Activated CD4-positive, alpha-beta T cell treated with anti-CD3 and anti-CD28 coated beads, Interleukin-2, amount 10 ng/mL, durations not matched to agents 24 days and 14 days (primary cell): ENCODE measurements at regions of chr10 and their contacts with region 1.

Region 1: DNA sequence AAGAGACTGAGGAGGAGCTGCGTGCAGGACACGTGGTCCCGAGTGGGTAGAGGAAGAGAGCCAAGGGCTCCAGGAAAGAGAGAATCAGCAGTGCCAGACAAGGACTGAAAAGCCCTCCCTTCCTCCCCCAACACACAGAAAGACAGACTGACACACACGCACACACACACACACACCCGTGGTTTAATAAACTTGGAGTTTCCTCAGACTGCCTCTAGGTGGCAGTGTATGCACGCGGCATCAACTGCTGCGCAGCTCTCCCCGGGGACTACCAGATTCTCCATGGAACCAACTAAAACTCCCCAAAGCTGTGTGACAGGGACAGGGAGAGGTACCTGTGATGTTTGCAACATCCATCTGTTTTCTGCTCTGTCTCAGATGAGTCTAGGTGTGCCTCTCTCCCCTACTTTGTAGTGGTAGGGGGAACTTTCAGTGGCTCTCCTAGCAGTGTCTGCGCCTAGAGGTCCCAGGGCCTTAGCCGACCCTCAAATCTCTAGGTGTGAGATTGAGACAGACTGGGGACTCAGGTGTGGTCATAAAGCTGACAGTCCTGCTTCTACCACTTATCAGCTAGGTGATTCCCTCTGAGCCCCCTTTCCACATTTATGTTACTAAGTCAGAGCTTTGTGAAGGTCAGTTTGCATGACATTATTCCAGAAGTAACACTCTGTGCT is 9.3 kb upstream of the TSPAN14 start:
- DNase-seq: peak; percentile 89
- H3K4me3 Mint-ChIP-seq: peak overlapping the region; percentile 5
- H3K27ac Mint-ChIP-seq: peak overlapping the region; percentile 22
- H3K4me1 Mint-ChIP-seq: peaks cover 29% of the 10 kb centered on the region
- H3K27me3 Mint-ChIP-seq: peaks cover 8% of the 10 kb centered on the region

Region 2: DNA sequence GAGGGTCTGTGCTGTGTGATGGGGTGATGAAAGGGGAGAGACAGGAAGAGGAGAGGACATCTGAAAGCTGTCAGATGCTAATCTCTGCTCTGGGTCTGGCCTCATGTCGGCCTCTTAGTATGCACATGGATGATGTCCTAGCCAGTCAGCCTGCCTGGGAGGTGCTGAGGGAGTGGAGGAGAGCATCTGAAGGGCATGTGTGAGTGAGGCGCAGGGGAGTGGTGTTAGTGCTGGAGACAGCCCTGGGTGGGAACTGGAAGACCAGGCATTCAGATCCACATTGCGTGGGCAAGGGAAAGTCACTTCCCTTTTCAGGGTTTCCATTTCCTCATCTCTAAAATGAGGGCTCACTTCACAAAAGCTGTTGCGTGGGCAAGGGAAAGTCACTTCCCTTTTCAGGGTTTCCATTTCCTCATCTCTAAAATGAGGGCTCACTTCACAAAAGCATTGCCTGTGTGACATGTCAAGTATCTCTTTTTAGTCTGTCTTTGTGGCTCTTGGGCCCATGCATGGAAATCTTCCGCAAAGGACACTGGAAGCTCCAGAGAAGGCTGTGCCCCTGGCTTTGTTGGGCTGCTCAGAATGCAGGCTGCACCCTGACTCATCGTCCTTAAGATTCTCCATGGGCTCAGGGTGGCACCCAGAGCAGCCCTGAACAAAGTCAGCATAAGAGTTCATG is 505.9 kb before region 1 on chr10:
- intact Hi-C with region 1: no loop called
- DNase-seq: peak; percentile 52
- H3K4me3 Mint-ChIP-seq: no peak overlapping the region
- H3K27ac Mint-ChIP-seq: no peak overlapping the region
- H3K4me1 Mint-ChIP-seq: peaks cover 5% of the 10 kb centered on the region
- H3K27me3 Mint-ChIP-seq: peaks cover 7% of the 10 kb centered on the region

Region 3: GRCh38 chr10:80382989-80383388 is 61.8 kb before region 1 on chr10:
- intact Hi-C with region 1: loop called (anchors 1 kb)
- DNase-seq: peak; percentile 87
- H3K4me3 Mint-ChIP-seq: no peak overlapping the region
- H3K27ac Mint-ChIP-seq: peak overlapping the region; percentile 49
- H3K4me1 Mint-ChIP-seq: peaks cover 13% of the 10 kb centered on the region
- H3K27me3 Mint-ChIP-seq: peaks cover 9% of the 10 kb centered on the region

Region 4: DNA sequence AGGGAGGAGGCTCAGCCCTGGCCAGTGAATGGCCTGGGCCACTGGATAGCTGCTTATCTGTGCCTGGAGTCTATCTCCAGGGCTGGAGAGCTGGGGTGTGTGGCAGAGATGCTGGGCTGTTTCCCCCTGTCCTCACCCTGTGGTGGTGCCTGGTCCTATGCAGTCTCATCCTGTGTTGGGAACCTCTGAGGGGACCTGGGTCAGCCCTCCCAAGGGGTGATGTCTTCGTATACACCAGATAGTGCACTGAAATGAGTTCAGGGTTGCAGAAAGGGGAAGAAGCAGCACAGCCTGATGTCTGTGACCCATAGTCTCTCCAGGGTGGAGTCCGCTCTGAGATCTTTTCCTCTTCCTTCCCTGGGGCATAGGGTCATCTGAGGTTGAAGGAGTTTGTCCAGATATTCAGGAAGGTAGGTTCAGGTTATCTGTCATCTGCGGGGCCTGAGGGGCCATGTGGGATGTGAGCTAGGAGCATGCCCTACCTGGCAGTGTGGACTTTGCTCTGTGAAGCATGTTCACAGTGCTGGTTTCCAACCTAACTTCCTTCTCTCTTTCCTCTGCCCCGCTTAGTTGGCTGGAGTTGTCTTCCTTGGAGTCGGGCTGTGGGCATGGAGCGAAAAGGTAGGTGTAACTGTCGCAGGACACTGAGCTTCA is 59.5 kb after region 1 on chr10:
- intact Hi-C with region 1: loop called (anchors 1 kb)
- DNase-seq: no peak
- H3K4me3 Mint-ChIP-seq: peak overlapping the region; percentile 11
- H3K27ac Mint-ChIP-seq: peak overlapping the region; percentile 77
- H3K4me1 Mint-ChIP-seq: peaks cover 62% of the 10 kb centered on the region
- H3K27me3 Mint-ChIP-seq: no peaks in the 10 kb centered on the region

Region 5: DNA sequence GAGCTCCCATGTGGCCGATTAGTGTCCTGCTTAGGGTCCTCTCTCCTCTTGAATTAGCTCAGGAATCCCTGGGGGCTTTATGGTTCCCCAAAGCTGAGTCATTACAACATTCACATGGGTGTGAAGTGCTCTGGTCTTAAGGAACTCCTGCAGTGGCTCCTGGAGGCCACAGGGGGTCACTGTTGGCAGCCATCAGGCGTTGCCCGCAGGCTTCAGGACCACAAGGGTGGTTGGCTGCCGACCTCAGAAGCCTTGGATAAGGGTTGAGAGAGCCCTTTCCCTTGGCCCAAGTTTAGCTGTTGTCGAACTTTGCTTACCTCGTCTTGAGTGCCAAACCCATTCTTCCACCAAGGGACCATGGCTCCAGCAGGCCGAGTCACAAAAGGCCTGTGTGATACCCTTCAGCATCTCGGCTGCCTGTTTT is 154.7 kb after region 1 on chr10:
- intact Hi-C with region 1: loop called (anchors 5 kb)
- DNase-seq: peak; percentile 78
- H3K4me3 Mint-ChIP-seq: no peak overlapping the region
- H3K27ac Mint-ChIP-seq: no peak overlapping the region
- H3K4me1 Mint-ChIP-seq: peaks cover 3% of the 10 kb centered on the region
- H3K27me3 Mint-ChIP-seq: no peaks in the 10 kb centered on the region

Region 6: GRCh38 chr10:80924063-80924952 is 479.5 kb after region 1 on chr10:
- intact Hi-C with region 1: loop called (anchors 5 kb)
- DNase-seq: peak; percentile 70
- H3K4me3 Mint-ChIP-seq: no peak overlapping the region
- H3K27ac Mint-ChIP-seq: no peak overlapping the region
- H3K4me1 Mint-ChIP-seq: no peaks in the 10 kb centered on the region
- H3K27me3 Mint-ChIP-seq: peaks cover 10% of the 10 kb centered on the region